PC-9 (cell line): ENCODE measurements at regions of chr6 and their contacts with region 1.

Region 1: GRCh38 chr6:37207903-37208456 is 38.0 kb downstream of the PIM1 start:
- DNase-seq: peak; percentile 68 to 84
- H3K4me3 ChIP-seq: no peak overlapping the region
- H3K27ac ChIP-seq: no peak overlapping the region
- H3K4me1 ChIP-seq: peaks cover 33% of the 10 kb centered on the region
- H3K27me3 ChIP-seq: no peaks in the 10 kb centered on the region
- CTCF ChIP-seq: peak; percentile 91

Region 2: GRCh38 chr6:36765594-36766398 is 442.2 kb before region 1 on chr6:
- CTCF ChIA-PET with region 1: interaction called, 3 read pairs
- POLR2A ChIA-PET with region 1: no interaction called
- intact Hi-C with region 1: loop called (anchors 1 kb)
- DNase-seq: peak; percentile 50 to 78
- H3K4me3 ChIP-seq: no peak overlapping the region
- H3K27ac ChIP-seq: no peak overlapping the region
- H3K4me1 ChIP-seq: peaks cover 24% of the 10 kb centered on the region
- H3K27me3 ChIP-seq: no peaks in the 10 kb centered on the region
- CTCF ChIP-seq: peak; percentile 92

Region 3: GRCh38 chr6:37051138-37052026 is 156.6 kb before region 1 on chr6:
- CTCF ChIA-PET with region 1: interaction called, 6 read pairs
- POLR2A ChIA-PET with region 1: no interaction called
- intact Hi-C with region 1: loop called (anchors 1 kb)
- DNase-seq: peak; percentile 52 to 82
- H3K4me3 ChIP-seq: no peak overlapping the region
- H3K27ac ChIP-seq: no peak overlapping the region
- H3K4me1 ChIP-seq: peaks cover 48% of the 10 kb centered on the region
- H3K27me3 ChIP-seq: no peaks in the 10 kb centered on the region
- CTCF ChIP-seq: peak; percentile 89

Region 4: GRCh38 chr6:37125783-37126492 is 82.0 kb before region 1 on chr6:
- CTCF ChIA-PET with region 1: no interaction called
- POLR2A ChIA-PET with region 1: interaction called, 14 read pairs
- intact Hi-C with region 1: no loop called
- DNase-seq: peak; percentile 28 to 71
- H3K4me3 ChIP-seq: peak overlapping the region; percentile 23; the same call in 1 of the 2 replicates
- H3K27ac ChIP-seq: peak overlapping the region; percentile 95
- H3K4me1 ChIP-seq: peaks cover 60% of the 10 kb centered on the region
- H3K27me3 ChIP-seq: no peaks in the 10 kb centered on the region
- CTCF ChIP-seq: no peak

Region 5: DNA sequence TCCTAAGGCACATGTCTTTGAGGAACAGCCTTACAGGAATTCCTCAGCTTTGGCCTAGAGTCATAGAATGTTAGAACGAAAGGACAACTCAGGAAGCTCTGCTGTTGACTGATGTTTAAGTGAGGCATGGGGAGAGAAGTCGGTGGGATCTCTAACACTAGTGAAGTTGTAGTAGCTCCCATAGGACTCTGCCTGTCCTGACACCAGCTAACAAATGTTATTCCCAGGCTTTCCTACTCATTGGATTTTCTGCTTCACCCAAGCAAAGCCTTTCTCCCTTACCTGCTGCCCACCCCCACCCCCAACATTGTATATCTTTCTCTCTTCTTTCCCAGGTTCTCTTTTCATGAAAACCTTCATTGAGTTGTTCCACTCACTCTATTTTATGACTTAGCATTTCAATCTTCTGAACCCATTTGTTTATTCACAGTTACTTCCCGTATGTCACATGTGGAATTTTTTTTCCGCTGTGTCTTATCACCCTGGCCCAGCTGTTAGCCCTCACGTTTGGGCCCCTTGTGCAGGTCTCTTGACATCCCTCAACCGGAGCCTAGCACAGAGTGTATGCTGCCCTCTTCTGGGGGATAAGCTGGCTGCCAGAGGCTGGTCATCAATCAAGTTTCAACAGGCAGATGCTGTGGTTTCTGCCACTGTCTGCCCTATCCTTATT is 106.6 kb after region 1 on chr6:
- CTCF ChIA-PET with region 1: no interaction called
- POLR2A ChIA-PET with region 1: no interaction called
- intact Hi-C with region 1: loop called (anchors 5 kb)
- DNase-seq: no peak
- H3K4me3 ChIP-seq: no peak overlapping the region
- H3K27ac ChIP-seq: no peak overlapping the region
- H3K4me1 ChIP-seq: peaks cover 9% of the 10 kb centered on the region
- H3K27me3 ChIP-seq: no peaks in the 10 kb centered on the region
- CTCF ChIP-seq: peak; percentile 57

Region 6: GRCh38 chr6:38337819-38338465 is 1130.0 kb after region 1 on chr6:
- CTCF ChIA-PET with region 1: no interaction called
- POLR2A ChIA-PET with region 1: no interaction called
- intact Hi-C with region 1: no loop called
- DNase-seq: no peak
- H3K4me3 ChIP-seq: no peak overlapping the region
- H3K27ac ChIP-seq: peak overlapping the region; percentile 64
- H3K4me1 ChIP-seq: peaks cover 11% of the 10 kb centered on the region
- H3K27me3 ChIP-seq: no peaks in the 10 kb centered on the region
- CTCF ChIP-seq: 0 out of 2 replicates have a peak, but pooled peaks have one; percentile 31